Activated T-helper 2 cell treated with anti-CD3 and anti-CD28 coated beads, Interferon-gamma antibody, Interleukin-2, Interleukin-4, amounts not matched to agents 10 μg/mL and 5 μg/mL and 100 μg/mL, durations not matched to agents 14 hours and 24 hours and 36 hours (primary cell): ENCODE measurements at regions of chr1 and their contacts with region 1.

Region 1: DNA sequence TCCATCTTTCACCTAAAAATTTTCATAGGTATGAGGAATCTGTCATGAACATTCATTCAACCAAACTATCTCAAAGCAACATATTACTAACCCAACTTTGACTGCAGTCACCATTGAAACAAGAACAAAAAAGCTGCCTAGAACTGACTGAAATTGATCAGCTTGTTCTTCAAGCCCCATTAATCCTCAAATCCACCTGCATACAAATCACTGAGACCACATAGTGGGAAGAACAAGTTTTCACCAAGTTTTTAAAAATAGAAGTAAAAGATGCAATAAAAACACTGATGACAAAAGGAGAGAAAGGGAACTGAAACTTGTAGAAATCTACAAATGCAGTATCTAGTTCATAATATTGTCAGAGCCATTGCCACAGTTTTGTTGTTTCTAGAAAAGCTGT is 6.1 kb downstream of the SORT1 start:
- DNase-seq: no peak
- H3K4me3 Mint-ChIP-seq: no peak overlapping the region
- H3K27ac Mint-ChIP-seq: no peak overlapping the region
- H3K4me1 Mint-ChIP-seq: peaks cover 31% of the 10 kb centered on the region
- H3K27me3 Mint-ChIP-seq: peaks cover 33% of the 10 kb centered on the region

Region 2: DNA sequence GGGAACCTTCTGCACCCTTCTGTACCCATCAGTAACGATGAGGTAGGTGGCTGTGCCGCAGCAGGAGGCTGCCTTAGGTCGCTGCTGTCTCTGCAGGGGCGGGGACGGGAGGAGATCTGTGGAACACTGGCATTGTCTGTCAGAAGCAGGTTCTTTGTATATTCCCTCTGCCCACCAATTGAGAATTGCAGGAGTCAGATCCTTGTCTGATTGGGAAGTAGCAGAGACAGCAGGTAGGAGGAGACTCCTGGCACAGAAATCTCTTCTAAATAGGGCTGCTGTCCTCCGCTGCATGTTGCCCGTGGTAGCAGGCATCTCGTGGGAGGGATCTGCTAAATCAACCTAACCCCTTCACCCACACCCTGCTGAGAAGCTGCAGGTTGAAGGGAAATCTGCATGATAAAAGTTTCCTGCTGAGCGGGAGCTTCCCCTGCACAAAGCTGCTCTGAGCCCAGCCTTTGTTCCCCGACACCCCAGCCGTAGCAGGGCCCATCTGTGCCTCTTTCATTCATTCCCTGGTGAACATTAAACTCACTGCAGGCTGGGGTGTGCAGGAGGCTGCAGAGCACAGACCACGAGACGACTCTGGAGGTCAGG is 162.0 kb before region 1 on chr1:
- intact Hi-C with region 1: no loop called
- DNase-seq: no peak
- H3K4me3 Mint-ChIP-seq: no peak overlapping the region
- H3K27ac Mint-ChIP-seq: no peak overlapping the region
- H3K4me1 Mint-ChIP-seq: peaks cover 6% of the 10 kb centered on the region
- H3K27me3 Mint-ChIP-seq: no peaks in the 10 kb centered on the region

Region 3: GRCh38 chr1:109370712-109371455 is 20.7 kb before region 1 on chr1:
- intact Hi-C with region 1: loop called (anchors 2 kb)
- DNase-seq: no peak
- H3K4me3 Mint-ChIP-seq: peak overlapping the region; percentile 43
- H3K27ac Mint-ChIP-seq: peak overlapping the region; percentile 46
- H3K4me1 Mint-ChIP-seq: peaks cover 47% of the 10 kb centered on the region
- H3K27me3 Mint-ChIP-seq: peaks cover 8% of the 10 kb centered on the region